BJ (cell line): ENCODE measurements at regions of chr1 and their contacts with region 1.

Region 1: DNA sequence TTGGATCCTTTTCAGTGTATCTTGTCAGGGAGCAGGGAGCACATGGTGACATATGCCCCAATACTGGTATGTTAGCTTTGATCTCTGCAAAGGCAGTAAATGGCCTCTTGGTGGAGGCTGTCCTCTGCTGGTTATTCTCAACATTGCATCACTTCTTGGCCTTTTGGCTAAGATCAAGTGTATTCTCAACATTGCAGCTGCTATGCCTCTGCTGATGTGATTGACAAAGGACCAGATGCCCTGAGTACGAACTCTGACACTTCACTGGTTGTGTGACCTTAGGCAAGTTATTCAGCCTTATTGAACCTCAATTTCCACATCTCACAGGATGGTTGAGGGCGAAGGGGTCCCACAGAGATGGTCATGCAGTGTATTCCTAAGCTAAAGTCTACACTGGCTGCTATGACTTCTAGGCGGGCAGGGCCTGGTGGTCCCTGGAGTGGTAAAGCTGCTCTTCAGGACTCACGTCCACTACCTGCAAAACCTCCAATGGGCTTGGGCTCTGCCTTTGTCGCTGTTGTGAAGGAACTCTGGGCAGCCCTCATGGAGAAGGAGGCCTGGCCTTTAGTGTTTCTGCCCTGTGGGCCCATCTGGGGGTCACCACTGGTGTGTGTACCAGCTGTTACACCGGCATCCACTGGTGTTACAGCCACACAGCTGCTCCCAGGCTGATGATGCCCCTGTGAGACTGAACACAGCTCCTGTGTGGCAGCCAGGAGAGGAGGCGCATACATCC is 64.8 kb downstream of the DNTTIP2 start:
- DNase-seq: no peak
- H3K4me3 ChIP-seq: no peak overlapping the region
- H3K27me3 ChIP-seq: no peaks in the 10 kb centered on the region
- CTCF ChIP-seq: peak; percentile 97

Region 2: DNA sequence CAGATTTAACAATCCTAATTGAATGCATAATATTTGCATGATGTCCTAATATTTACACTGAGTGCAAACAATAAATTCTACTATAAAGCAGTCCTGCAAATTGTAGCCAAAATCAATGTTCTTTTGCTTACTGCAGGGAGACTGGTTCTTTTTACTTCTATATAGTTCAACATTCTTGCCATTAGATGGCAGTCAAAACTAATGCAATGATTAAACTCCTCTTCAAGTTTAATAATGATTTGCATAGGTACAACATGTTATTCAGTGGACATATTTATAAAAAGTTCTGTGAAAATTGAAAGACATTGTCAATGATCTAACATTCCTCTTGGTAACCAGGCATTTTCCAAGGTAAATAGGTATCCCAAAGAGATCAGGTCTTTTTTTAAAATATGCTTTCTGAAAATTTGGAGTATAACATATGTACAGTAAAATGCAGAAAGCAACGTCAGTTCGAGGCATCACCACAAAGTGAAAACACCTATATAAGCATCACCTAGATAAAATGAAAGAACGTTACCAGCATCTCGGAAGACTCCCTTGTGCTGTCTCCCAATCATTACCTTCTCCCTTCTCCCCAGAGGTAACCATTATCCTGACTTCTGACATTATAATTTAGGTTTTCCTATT is 376.1 kb before region 1 on chr1:
- CTCF ChIA-PET with region 1: interaction called, 16 read pairs
- POLR2A ChIA-PET with region 1: no interaction called
- DNase-seq: peak; percentile 17
- H3K4me3 ChIP-seq: no peak overlapping the region
- H3K27me3 ChIP-seq: peaks cover 7% of the 10 kb centered on the region
- CTCF ChIP-seq: peak; percentile 56

Region 3: GRCh38 chr1:93615582-93616150 is 198.6 kb before region 1 on chr1:
- CTCF ChIA-PET with region 1: interaction called, 20 read pairs
- POLR2A ChIA-PET with region 1: no interaction called
- DNase-seq: peak; percentile 56
- H3K4me3 ChIP-seq: no peak overlapping the region
- H3K27me3 ChIP-seq: no peaks in the 10 kb centered on the region
- CTCF ChIP-seq: no peak

Region 4: DNA sequence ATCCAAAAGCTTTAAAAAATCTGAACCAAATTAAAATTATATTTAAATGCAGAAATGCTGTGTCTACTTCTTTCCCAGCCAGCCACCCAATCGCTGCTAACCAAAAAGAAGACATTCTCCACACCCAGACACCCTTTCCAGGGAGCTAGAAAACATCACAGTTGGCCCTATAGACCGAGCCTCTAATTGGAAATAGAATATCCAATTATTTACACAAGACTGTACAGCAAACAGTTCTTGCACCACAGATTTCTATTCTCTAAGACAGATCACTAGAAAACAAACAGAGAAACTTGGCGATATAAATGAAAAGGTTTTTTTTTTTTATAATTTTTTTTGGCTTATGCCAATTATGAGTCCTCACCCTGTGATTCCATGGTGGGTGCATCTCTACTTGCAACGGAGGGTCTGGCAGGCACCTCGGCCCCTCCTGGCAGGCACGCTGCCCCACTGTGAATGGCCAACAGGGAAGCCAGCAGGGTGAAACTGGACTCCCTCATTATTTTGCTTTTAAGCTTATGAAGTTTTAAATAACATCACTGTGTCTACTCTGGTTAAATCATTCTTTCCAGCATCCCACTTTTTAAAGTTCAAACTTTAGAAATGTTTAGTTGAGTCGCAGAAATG is 161.8 kb before region 1 on chr1:
- CTCF ChIA-PET with region 1: interaction called, 10 read pairs
- POLR2A ChIA-PET with region 1: no interaction called
- DNase-seq: no peak
- H3K4me3 ChIP-seq: no peak overlapping the region
- H3K27me3 ChIP-seq: no peaks in the 10 kb centered on the region
- CTCF ChIP-seq: no peak

Region 5: GRCh38 chr1:93686497-93687250 is 127.6 kb before region 1 on chr1:
- CTCF ChIA-PET with region 1: interaction called, 74 read pairs
- POLR2A ChIA-PET with region 1: no interaction called
- DNase-seq: no peak
- H3K4me3 ChIP-seq: no peak overlapping the region
- H3K27me3 ChIP-seq: no peaks in the 10 kb centered on the region
- CTCF ChIP-seq: no peak

Region 6: GRCh38 chr1:93701619-93702018 is 112.6 kb before region 1 on chr1:
- CTCF ChIA-PET with region 1: interaction called, 26 read pairs
- POLR2A ChIA-PET with region 1: no interaction called
- DNase-seq: peak; percentile 94
- H3K4me3 ChIP-seq: no peak overlapping the region
- H3K27me3 ChIP-seq: no peaks in the 10 kb centered on the region
- CTCF ChIP-seq: no peak

Region 7: DNA sequence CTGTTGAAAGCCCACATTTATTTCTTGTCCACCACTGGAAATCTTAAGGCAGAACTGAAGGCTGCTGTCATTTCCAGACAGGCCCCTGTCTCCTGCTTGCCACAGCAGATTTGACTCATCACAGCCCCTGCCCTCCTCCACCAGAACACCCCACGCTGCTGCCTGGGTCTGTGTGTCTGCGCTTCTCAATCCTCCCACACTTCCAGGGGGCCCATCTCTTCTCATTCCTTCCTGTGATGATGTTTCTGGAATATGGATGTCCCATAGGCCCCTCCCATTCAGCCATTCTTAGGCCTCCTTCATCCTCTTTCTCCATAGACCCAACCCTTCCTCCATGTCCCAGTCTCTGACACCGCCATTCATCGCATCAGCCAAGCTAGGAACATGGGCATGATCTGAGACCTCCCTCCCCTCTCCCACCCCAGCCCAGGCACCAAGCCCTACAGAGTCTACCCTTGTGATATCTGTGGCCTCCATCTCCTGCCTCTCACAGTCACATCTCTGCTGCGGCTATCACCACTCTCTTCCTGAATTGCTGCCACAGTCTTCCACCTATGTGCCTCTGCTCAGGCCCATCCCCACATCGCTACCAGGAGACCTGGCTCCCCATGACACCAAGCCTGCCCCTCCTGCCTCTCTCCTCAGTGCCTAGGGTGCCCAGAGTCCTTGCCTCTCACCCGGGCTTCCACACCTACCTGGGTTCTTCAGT is 50.0 kb before region 1 on chr1:
- CTCF ChIA-PET with region 1: no interaction called
- POLR2A ChIA-PET with region 1: no interaction called
- DNase-seq: no peak
- H3K4me3 ChIP-seq: no peak overlapping the region
- H3K27me3 ChIP-seq: no peaks in the 10 kb centered on the region
- CTCF ChIP-seq: no peak

Region 8: DNA sequence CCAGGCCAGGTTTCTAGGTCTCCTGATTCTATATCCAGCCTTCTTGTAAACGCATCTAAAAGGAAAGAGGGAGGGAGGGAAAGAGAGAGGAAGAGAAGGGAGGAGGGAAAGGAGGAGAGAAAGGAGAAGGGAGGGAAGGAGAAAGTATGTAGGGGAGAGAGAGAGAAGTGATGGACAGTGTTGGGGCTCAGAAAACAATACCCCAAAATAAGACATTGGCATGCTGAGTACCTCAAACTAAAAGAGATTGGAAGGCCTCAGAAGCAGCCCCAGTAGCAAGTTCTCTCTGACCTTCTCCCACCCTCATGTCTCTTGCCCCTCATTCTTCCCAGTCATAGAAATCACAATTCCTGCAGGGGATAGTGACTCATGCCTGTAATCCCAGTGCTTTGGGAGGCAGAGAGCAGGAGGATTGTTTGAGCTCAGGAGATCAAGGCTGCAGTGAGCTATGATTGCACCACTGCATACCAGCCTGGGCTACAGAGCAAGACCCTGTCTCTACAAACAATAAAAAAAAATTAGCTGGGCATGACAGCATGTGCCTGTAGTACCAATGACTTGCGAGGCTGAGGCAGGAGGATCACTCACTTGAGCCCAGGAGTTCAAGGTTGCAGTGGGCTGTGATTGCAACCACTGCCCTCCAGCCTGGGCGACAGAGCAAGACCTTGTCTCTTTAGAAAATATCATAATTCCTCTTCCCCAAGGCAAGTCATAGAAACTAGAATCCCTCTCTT is 13.6 kb after region 1 on chr1:
- CTCF ChIA-PET with region 1: interaction called, 37 read pairs
- POLR2A ChIA-PET with region 1: no interaction called
- DNase-seq: no peak
- H3K4me3 ChIP-seq: no peak overlapping the region
- H3K27me3 ChIP-seq: no peaks in the 10 kb centered on the region
- CTCF ChIP-seq: no peak